ENCODE measurements at regions of chr6 and their contacts with region 1.

Region 1: GRCh38 chr6:122471107-122472021 is at the start of gene SERINC1:
- DNase-seq: peak; percentile 66
- ATAC-seq: peak; percentile 98
- H3K4me3 ChIP-seq: peak within 1 kb of the TSS; percentile 92
- H3K27ac ChIP-seq: peak within 1 kb of the TSS; percentile 89
- H3K4me1 ChIP-seq: no peaks in the 10 kb centered on the region; the same call in 1 of the 2 replicates
- H3K27me3 ChIP-seq: no peaks in the 10 kb centered on the region
- CTCF ChIP-seq: no peak
- EP300 ChIP-seq: no peak
- POLR2A ChIP-seq: peak; percentile 91
- RAD21 ChIP-seq: no peak
- polyA plus RNA-seq, gene SERINC1: 18.5 to 22.5 TPM

Region 2: GRCh38 chr6:121334299-121335086 is 1136.9 kb before region 1 on chr6 and contains the start of gene TBC1D32:
- CTCF ChIA-PET with region 1: no interaction called
- POLR2A ChIA-PET with region 1: no interaction called
- RAD21 ChIA-PET with region 1: no interaction called
- SMC1A ChIA-PET with region 1: no interaction called
- in situ Hi-C with region 1: loop called (anchors 25 kb)
- intact Hi-C with region 1: no loop called
- DNase-seq: peak; percentile 73
- ATAC-seq: peak; percentile 96
- H3K4me3 ChIP-seq: peak within 1 kb of the TSS; percentile 83
- H3K27ac ChIP-seq: peak within 1 kb of the TSS; percentile 93
- H3K4me1 ChIP-seq: no peaks in the 10 kb centered on the region
- H3K27me3 ChIP-seq: no peaks in the 10 kb centered on the region
- CTCF ChIP-seq: no peak
- EP300 ChIP-seq: no peak
- POLR2A ChIP-seq: peak; percentile 87
- RAD21 ChIP-seq: no peak
- polyA plus RNA-seq, gene TBC1D32: 2.2 TPM

Region 3: GRCh38 chr6:122381497-122382265 is 89.7 kb before region 1 on chr6:
- CTCF ChIA-PET with region 1: interaction called, 3 read pairs
- POLR2A ChIA-PET with region 1: no interaction called
- RAD21 ChIA-PET with region 1: no interaction called
- SMC1A ChIA-PET with region 1: interaction called, 3 read pairs
- in situ Hi-C with region 1: no loop called
- intact Hi-C with region 1: loop called (anchors 2 kb)
- DNase-seq: peak; percentile 7
- ATAC-seq: peak; percentile 95
- H3K4me3 ChIP-seq: no peak overlapping the region
- H3K27ac ChIP-seq: no peak overlapping the region
- H3K4me1 ChIP-seq: no peaks in the 10 kb centered on the region
- H3K27me3 ChIP-seq: no peaks in the 10 kb centered on the region; a peak in 1 of 4 replicates
- CTCF ChIP-seq: peak; percentile 74 to 82 (median 80)
- EP300 ChIP-seq: no peak
- POLR2A ChIP-seq: no peak
- RAD21 ChIP-seq: peak; percentile 83

Region 4: GRCh38 chr6:122399384-122400158 is 71.8 kb before region 1 on chr6 and contains the start of gene HSF2:
- CTCF ChIA-PET with region 1: interaction called, 3 read pairs
- POLR2A ChIA-PET with region 1: interaction called, 9 read pairs
- RAD21 ChIA-PET with region 1: interaction called, 3 read pairs
- SMC1A ChIA-PET with region 1: interaction called, 3 read pairs
- in situ Hi-C with region 1: no loop called
- intact Hi-C with region 1: loop called (anchors 2 kb)
- DNase-seq: peak; percentile 86
- ATAC-seq: peak; percentile 99
- H3K4me3 ChIP-seq: peak within 1 kb of the TSS; percentile 93
- H3K27ac ChIP-seq: peak within 1 kb of the TSS; percentile 74
- H3K4me1 ChIP-seq: no peaks in the 10 kb centered on the region; the same call in none of the 2 replicates
- H3K27me3 ChIP-seq: no peaks in the 10 kb centered on the region
- CTCF ChIP-seq: peak in 2 of 3 experiments; percentile 9 to 28; a peak in 1 of 6 replicates
- EP300 ChIP-seq: no peak
- POLR2A ChIP-seq: peak; percentile 81
- RAD21 ChIP-seq: no peak
- polyA plus RNA-seq, gene HSF2: 16.2 to 18.4 TPM

Region 5: DNA sequence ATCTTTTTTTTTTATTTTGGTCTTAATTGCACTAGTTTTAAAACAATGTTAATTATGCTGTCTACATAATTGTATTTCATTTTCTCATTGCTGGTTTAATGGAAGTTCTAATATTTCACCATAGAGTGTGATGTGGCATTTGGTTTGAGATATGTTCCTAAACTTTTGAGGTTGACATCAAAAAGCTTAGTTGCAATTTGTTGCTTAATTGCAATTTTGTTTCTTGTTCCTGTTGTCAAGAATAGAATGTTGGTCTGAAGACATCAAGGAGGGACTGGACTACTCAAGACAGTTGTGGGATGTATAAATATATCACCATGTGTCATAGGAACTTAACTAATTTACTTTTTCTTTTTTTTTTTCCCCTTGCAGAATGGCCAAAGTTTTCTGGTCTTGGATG is 59.4 kb before region 1 on chr6:
- CTCF ChIA-PET with region 1: no interaction called
- POLR2A ChIA-PET with region 1: no interaction called
- RAD21 ChIA-PET with region 1: no interaction called
- SMC1A ChIA-PET with region 1: no interaction called
- in situ Hi-C with region 1: no loop called
- intact Hi-C with region 1: no loop called
- DNase-seq: no peak
- ATAC-seq: no peak
- H3K4me3 ChIP-seq: no peak overlapping the region
- H3K27ac ChIP-seq: no peak overlapping the region
- H3K4me1 ChIP-seq: no peaks in the 10 kb centered on the region
- H3K27me3 ChIP-seq: no peaks in the 10 kb centered on the region
- CTCF ChIP-seq: no peak
- EP300 ChIP-seq: no peak
- POLR2A ChIP-seq: no peak
- RAD21 ChIP-seq: no peak

Region 6: DNA sequence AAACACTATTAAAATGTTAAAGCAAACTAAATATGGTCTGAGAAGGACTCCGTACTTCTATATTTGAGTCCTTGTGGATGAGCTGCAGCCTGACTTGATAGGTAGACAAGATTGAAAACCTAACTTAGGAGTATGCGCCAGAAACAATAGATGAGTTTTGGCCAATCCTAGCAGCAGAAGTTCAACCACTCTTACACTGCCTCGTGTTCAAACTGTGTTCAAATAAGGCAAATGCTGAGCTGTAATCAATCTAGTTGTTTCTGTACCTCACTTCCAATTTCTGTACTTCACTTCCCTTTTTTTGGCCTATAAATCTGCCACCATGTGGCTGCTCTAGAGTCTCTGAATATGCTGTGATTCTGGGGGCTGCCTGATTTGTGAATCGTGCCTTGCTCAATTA is 13.4 kb after region 1 on chr6:
- CTCF ChIA-PET with region 1: interaction called, 8 read pairs
- POLR2A ChIA-PET with region 1: interaction called, 11 read pairs
- RAD21 ChIA-PET with region 1: interaction called, 5 read pairs
- SMC1A ChIA-PET with region 1: no interaction called
- in situ Hi-C with region 1: no loop called
- intact Hi-C with region 1: no loop called
- DNase-seq: no peak
- ATAC-seq: peak; percentile 94
- H3K4me3 ChIP-seq: no peak overlapping the region
- H3K27ac ChIP-seq: no peak overlapping the region
- H3K4me1 ChIP-seq: no peaks in the 10 kb centered on the region
- H3K27me3 ChIP-seq: no peaks in the 10 kb centered on the region
- CTCF ChIP-seq: peak; percentile 21 to 24 (median 22); a peak in 3 of 6 replicates
- EP300 ChIP-seq: no peak
- POLR2A ChIP-seq: no peak
- RAD21 ChIP-seq: peak; percentile 34; the same call in 1 of the 2 replicates

Region 7: GRCh38 chr6:122717350-122717749 is 246.0 kb after region 1 on chr6:
- CTCF ChIA-PET with region 1: interaction called, 3 read pairs
- POLR2A ChIA-PET with region 1: no interaction called
- RAD21 ChIA-PET with region 1: no interaction called
- SMC1A ChIA-PET with region 1: no interaction called
- in situ Hi-C with region 1: no loop called
- intact Hi-C with region 1: loop called (anchors 10 kb)
- DNase-seq: no peak
- ATAC-seq: no peak
- H3K4me3 ChIP-seq: no peak overlapping the region
- H3K27ac ChIP-seq: no peak overlapping the region
- H3K4me1 ChIP-seq: no peaks in the 10 kb centered on the region
- H3K27me3 ChIP-seq: no peaks in the 10 kb centered on the region; a peak in 1 of 4 replicates
- CTCF ChIP-seq: no peak
- EP300 ChIP-seq: no peak
- POLR2A ChIP-seq: no peak
- RAD21 ChIP-seq: no peak

Measured in GM12878 (cell line).